ENCODE measurements at regions of chr16 and their contacts with region 1.

Region 1: DNA sequence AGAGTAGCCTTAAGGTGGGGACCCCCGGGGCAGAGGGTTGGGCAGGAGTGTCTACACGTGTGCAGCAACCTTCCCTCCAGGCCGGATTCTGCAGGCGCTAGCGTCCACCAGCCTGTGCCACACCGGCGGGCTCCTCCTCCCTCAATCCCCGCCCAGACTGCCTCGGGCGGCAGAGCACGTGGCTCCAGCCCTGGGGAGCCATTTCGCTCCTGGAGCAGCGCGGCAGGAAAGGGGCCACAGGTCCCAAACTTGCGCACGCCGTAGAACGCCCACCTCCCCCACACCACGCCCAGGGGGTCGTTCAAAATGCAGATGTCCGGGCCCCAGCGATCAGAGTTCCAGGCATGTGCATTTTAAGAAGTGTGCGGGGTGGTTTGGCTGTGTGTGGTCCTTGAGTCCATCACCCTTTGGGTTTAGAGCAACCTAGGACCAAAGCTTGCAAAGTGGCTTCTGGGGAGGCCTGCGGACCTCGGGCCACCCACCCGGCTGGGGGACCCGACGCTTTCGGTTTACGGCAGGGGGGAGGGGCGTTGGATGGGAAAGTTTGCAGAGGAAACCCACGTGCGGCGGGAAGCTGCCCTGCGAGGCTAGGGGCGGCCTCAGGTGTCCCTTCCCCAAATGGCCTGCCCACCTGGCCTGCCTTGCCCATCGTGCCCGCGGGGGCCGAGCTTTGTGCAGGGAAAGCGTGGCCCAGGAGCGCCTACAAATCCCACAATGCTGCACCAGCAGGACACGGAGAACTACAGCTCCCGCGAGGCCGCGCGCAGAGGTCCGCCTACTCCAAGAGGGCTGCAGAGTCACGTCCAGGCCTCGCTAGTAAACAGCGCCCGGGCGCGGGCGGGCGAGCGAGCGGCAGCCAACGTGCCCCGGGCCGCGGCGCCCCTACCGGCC is 1.4 kb downstream of the TFAP4 start:
- DNase-seq: peak; percentile 95
- ATAC-seq: peak; percentile 86
- H3K4me3 Mint-ChIP-seq: peak overlapping the region; percentile 85
- H3K27ac Mint-ChIP-seq: peak overlapping the region; percentile 93
- H3K4me1 Mint-ChIP-seq: peaks cover 21% of the 10 kb centered on the region
- H3K27me3 Mint-ChIP-seq: no peaks in the 10 kb centered on the region

Region 2: GRCh38 chr16:4232541-4233386 is 38.7 kb before region 1 on chr16:
- CTCF ChIA-PET with region 1: no interaction called
- DNase-seq: no peak
- ATAC-seq: no peak
- H3K4me3 Mint-ChIP-seq: no peak overlapping the region
- H3K27ac Mint-ChIP-seq: no peak overlapping the region
- H3K4me1 Mint-ChIP-seq: no peaks in the 10 kb centered on the region
- H3K27me3 Mint-ChIP-seq: peaks cover 14% of the 10 kb centered on the region

Region 3: DNA sequence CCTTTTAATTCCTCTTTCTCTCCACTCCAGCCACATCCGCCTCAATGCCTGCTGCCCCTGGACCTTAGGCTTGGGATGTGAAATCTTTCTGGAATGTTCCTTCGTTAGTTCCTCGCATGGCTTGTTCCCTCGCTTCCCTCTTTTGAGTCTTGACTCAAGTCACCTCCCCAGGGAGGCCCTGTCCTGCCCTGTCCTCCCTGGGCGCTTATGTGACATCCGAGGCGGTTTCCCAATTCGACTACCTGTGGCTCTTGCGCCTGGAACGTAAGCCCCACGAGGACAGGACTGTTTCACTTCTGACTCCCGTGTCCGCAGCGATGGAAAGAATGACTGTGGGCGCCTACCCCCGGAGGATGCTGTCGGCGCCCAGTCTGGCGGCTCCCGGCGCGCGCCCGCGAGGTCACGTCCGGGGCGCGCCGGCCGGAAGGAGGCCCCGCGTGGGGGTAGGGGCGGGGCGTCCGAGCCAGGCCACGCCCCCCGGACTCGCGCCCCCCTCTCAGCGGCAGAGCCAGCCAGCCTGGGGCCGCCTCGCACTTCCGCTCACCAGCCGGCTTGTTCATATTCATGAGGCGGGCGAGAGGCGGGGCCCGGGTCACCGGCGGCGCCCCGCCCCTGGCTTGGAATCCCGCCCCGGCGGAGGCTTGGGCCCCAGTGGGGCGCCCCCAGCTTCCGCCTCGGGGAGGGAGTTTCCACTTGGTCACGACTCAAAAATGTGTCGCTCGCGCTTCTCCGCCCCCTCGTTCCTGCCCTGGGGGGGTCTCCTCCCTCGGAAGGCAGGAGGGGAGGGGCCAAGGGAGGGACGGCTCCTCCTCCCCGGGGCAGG is 36.0 kb after region 1 on chr16:
- CTCF ChIA-PET with region 1: interaction called, 15 read pairs
- DNase-seq: peak; percentile 98
- ATAC-seq: peak; percentile 94
- H3K4me3 Mint-ChIP-seq: peak overlapping the region; percentile 96
- H3K27ac Mint-ChIP-seq: peak overlapping the region; percentile 97
- H3K4me1 Mint-ChIP-seq: peaks cover 22% of the 10 kb centered on the region
- H3K27me3 Mint-ChIP-seq: no peaks in the 10 kb centered on the region

Measured in activated CD8-positive, alpha-beta memory T cell treated with anti-CD3 and anti-CD28 coated beads, Interleukin-2, amount 10 ng/mL, durations not matched to agents 7 days and 5 days (primary cell).